Panc1 (cell line): ENCODE measurements at regions of chr17 and their contacts with region 1.

Region 1: GRCh38 chr17:75034236-75034908 is 12.4 kb downstream of the ATP5PD start:
- DNase-seq: peak; percentile 84
- ATAC-seq: peak; percentile 76
- H3K4me3 ChIP-seq: peak overlapping the region; percentile 66 to 88
- H3K27ac ChIP-seq: peak overlapping the region; percentile 93
- H3K4me1 ChIP-seq: peaks cover 10% of the 10 kb centered on the region; the same call in 1 of the 2 replicates
- H3K27me3 ChIP-seq: no peaks in the 10 kb centered on the region
- CTCF ChIP-seq: no peak

Region 2: DNA sequence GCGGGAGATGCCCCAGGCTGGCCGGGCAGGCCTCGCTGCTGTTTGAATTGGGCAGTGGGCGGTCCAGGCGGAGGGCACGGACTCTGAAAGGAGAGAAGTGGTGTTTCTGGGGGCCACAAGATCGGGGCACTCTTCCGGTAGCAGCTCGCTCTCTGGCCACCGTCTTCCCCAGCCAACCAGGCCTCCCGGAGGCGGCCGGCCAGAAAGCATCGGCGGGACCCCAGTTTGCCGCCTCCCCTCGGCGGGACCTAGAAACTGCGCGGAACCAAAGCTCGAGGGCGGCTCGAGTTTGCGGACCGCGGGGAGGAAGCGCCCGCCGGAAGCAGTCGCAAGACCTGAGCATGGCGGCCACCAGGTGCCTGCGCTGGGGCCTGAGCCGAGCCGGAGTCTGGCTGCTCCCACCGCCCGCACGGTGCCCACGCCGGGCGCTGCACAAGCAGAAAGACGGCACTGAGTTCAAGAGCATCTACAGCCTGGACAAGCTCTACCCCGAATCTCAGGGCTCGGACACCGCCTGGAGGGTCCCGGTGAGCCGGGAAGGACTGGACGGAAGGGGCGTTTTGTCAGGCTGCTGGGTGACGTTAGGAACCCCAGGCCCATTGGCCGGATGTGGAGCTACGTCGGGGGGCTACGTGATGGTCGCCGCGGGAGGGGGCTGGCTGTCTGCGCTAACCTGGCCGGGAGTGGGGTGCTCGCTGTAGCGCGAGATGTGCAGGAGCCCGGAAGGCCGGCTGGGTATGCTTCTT is 21.9 kb before region 1 on chr17 and contains the start of gene MRPL58:
- CTCF ChIA-PET with region 1: interaction called, 3 read pairs
- POLR2A ChIA-PET with region 1: interaction called, 10 read pairs
- in situ Hi-C with region 1: no loop called
- intact Hi-C with region 1: no loop called
- DNase-seq: no peak
- ATAC-seq: peak; percentile 96
- H3K4me3 ChIP-seq: peak within 1 kb of the TSS; percentile 78 to 82
- H3K27ac ChIP-seq: peak within 1 kb of the TSS; percentile 78
- H3K4me1 ChIP-seq: peaks cover 21% of the 10 kb centered on the region
- H3K27me3 ChIP-seq: no peaks in the 10 kb centered on the region
- CTCF ChIP-seq: no peak
- total RNA-seq, gene MRPL58: 55.2 TPM

Region 3: GRCh38 chr17:75048479-75048878 is 14.1 kb after region 1 on chr17:
- CTCF ChIA-PET with region 1: interaction called, 10 read pairs
- POLR2A ChIA-PET with region 1: no interaction called
- in situ Hi-C with region 1: no loop called
- intact Hi-C with region 1: no loop called
- DNase-seq: no peak
- ATAC-seq: no peak
- H3K4me3 ChIP-seq: peak overlapping the region; percentile 96 to 100
- H3K27ac ChIP-seq: peak overlapping the region; percentile 88
- H3K4me1 ChIP-seq: peaks cover 15% of the 10 kb centered on the region
- H3K27me3 ChIP-seq: no peaks in the 10 kb centered on the region
- CTCF ChIP-seq: no peak